ENCODE measurements at regions of chr3 and their contacts with region 1.

Region 1: DNA sequence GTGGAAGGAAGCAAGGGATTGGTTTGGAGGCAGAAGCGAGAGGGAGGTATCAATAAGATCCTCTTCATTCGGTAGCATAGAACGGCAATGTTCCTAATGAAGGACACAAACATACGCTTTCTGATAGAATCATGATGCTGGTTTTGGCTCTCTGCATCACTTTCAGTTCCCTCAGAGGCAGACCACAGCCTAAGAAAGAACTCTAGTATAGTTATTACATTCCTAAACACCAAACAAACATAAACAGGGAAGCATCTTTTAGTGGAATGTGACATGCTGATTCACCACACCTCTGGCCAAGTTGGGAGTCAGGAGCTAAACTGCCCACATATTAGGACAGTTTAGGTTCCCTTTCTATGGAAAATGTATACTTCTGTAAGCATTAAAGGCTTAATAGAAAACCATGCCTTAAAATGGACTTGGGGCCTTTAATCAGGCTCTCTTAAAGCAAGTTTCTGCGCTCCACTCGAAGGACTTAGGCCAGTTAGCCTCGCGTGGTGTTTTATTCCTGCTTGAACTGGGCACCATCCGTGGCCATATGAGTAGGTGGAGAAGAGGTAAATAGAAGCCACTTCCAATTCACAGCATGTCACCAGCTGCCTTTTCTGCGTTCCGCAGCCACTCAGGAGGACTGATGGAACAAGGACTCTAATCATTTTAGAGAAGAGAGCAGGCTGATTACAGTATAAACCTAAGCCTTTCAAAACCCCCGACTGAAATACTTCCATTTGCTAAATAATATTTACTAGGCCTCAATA is 53.7 kb downstream of the CD47 start:
- DNase-seq: peak in 1 of 10 donors; percentile 62
- H3K4me3 ChIP-seq: no peak overlapping the region
- H3K27ac ChIP-seq: peak overlapping the region in 40 of 59 donors; percentile 1 to 78 (median 28)
- H3K27me3 ChIP-seq: no peaks in the 10 kb centered on the region
- CTCF ChIP-seq: no peak

Region 2: GRCh38 chr3:107956991-107957900 is 79.9 kb before region 1 on chr3:
- intact Hi-C with region 1: loop called (anchors 5 to 10 kb)
- DNase-seq: peak in 9 of 10 donors; percentile 40 to 82 (median 67)
- H3K4me3 ChIP-seq: peak overlapping the region in 43 of 59 donors; percentile 0 to 51 (median 27)
- H3K27ac ChIP-seq: peak overlapping the region in 55 of 59 donors; percentile 9 to 87 (median 68)
- H3K27me3 ChIP-seq: no peaks in the 10 kb centered on the region
- CTCF ChIP-seq: no peak

Measured in dorsolateral prefrontal cortex (tissue), 120 donors.